ENCODE measurements at regions of chr20 and their contacts with region 1.

Region 1: GRCh38 chr20:31569163-31570020 is 35.7 kb upstream of the ID1 start:
- DNase-seq: no peak
- H3K4me3 ChIP-seq: no peak overlapping the region
- H3K27ac ChIP-seq: no peak overlapping the region
- H3K27me3 ChIP-seq: no peaks in the 10 kb centered on the region
- CTCF ChIP-seq: peak; percentile 93

Region 2: GRCh38 chr20:31605031-31605901 is 35.9 kb after region 1 on chr20 and contains the start of gene ID1:
- in situ Hi-C with region 1: loop called (anchors 5 kb)
- DNase-seq: peak; percentile 94
- H3K4me3 ChIP-seq: peak within 1 kb of the TSS; percentile 94
- H3K27ac ChIP-seq: peak within 1 kb of the TSS; percentile 90
- H3K27me3 ChIP-seq: no peaks in the 10 kb centered on the region
- CTCF ChIP-seq: no peak

Region 3: GRCh38 chr20:31684153-31685015 is 115.0 kb after region 1 on chr20:
- in situ Hi-C with region 1: no loop called
- DNase-seq: no peak
- H3K4me3 ChIP-seq: no peak overlapping the region
- H3K27ac ChIP-seq: no peak overlapping the region
- H3K27me3 ChIP-seq: no peaks in the 10 kb centered on the region
- CTCF ChIP-seq: no peak